Dorsolateral prefrontal cortex (tissue), 120 donors: ENCODE measurements at regions of chr2 and their contacts with region 1.

Region 1: DNA sequence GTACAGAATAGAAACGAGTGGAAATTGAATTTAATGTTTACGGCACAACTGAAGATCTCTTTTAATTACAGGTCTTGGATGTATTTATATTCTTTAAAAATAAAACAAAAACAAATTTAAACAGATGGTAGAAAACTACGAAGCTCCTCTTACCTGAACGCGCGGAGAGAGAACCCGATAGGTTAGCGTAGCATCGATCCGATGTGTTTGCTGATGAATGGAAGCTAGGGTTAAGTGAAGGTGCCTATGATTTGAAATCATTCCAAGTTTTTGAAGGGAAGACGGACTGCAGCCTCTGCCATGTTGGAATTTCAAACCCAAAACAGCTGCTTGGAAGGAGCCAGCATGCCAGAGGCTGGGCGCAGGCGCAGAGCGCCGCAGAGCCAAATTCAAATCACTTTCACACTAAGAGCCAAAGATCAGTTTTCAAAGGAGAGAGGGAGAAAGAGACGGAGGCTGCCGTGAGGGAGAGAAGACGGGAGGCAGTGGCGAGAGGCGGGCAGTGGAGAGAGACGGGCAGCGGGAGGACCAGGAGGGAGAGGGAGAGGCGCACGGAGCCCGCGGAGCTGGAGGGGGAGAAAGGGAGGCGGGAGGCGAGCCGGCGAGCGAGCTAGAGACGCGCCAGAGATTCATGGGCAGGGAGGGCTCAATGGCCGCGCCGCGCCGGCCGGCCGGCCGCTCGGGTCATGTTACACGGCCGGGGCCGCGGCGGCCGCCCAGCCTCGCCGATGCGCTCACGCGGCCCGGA is at the start of gene FIGN:
- DNase-seq: peak; percentile 12 to 87 (median 80)
- H3K4me3 ChIP-seq: peak within 1 kb of the TSS; percentile 55 to 88 (median 77)
- H3K27ac ChIP-seq: peak within 1 kb of the TSS; percentile 55 to 94 (median 89)
- H3K27me3 ChIP-seq: peaks cover 0 to 5% (median 0%) of the 10 kb centered on the region in 45 donors
- CTCF ChIP-seq: peak in 3 of 56 donors; percentile 9 to 26 (median 15)
- total RNA-seq, gene FIGN: 8.8 to 29.6 (median 19.1) TPM

Region 2: GRCh38 chr2:163345908-163346573 is 389.8 kb before region 1 on chr2:
- intact Hi-C with region 1: loop called in 1 of 2 experiments (anchors 5 kb)
- DNase-seq: peak in 1 of 10 donors; percentile 26
- H3K4me3 ChIP-seq: peak overlapping the region in 1 of 59 donors; percentile 30
- H3K27ac ChIP-seq: peak overlapping the region in 1 of 59 donors; percentile 4
- H3K27me3 ChIP-seq: no peaks in the 10 kb centered on the region
- CTCF ChIP-seq: peak; percentile 79 to 96 (median 89)

Region 3: DNA sequence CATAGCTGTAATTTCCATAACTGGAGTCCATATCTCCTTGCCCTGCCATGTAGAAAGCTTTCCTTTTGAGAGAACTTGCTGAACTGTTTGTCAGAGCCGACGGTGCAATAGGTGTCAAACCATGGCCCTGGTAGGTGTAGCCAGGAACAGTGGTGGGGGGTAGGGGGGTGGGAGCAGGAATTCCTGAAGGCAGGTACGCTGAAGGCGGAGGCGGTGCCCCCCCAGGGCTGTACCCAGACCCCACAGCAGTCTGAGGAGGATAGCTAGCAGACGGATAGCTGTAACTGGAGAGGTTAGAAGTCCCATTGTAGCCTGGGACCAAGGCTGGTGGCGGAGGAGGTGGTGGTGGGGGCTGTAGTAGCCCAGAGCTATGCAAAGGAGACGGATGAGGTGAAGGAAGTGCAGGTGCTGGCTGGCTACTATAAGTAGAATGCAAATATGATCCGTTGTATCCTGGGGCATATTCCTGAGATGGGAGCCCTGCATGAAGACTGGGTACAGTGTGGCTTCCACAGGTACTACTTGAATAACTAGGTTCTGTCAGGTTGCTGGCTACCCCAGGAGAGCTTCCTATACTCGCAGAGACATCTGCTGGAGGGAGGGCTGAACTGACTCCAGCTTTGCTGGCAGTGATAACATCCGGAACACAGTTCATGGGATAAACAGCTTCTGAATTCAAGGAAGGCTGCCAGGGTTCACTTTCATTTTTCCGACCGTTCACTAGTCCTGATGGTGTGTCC is 124.9 kb before region 1 on chr2:
- intact Hi-C with region 1: loop called in 1 of 2 experiments (anchors 5 kb)
- DNase-seq: peak in 5 of 10 donors; percentile 14 to 73 (median 45)
- H3K4me3 ChIP-seq: peak overlapping the region in 40 of 59 donors; percentile 5 to 59 (median 31)
- H3K27ac ChIP-seq: peak overlapping the region in 36 of 59 donors; percentile 1 to 87 (median 60)
- H3K27me3 ChIP-seq: no peaks in the 10 kb centered on the region
- CTCF ChIP-seq: peak in 54 of 56 donors; percentile 10 to 69 (median 47)

Region 4: DNA sequence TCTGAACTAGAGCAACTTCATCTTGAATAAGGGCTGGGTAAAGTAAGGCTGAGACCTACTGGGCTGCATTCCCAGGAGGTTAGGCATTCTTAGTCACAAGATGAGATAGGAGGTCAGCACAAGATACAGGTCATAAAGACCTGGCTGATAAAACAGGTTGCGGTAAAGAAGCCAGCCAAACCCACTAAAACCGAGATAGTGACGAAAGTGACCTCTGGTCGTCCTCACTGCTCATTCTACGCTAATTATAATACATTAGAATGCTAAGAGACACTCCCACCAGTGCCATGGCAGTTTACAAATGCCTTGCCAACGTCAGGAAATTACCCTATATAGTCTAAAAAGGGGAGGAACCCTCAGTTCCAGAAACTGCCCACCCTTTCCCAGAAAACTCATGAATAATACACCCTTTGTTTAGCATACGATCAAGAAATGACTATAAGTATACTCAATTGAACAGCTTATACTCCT is 109.2 kb before region 1 on chr2:
- intact Hi-C with region 1: no loop called
- DNase-seq: no peak
- H3K4me3 ChIP-seq: no peak overlapping the region
- H3K27ac ChIP-seq: no peak overlapping the region
- H3K27me3 ChIP-seq: no peaks in the 10 kb centered on the region
- CTCF ChIP-seq: no peak

Region 5: DNA sequence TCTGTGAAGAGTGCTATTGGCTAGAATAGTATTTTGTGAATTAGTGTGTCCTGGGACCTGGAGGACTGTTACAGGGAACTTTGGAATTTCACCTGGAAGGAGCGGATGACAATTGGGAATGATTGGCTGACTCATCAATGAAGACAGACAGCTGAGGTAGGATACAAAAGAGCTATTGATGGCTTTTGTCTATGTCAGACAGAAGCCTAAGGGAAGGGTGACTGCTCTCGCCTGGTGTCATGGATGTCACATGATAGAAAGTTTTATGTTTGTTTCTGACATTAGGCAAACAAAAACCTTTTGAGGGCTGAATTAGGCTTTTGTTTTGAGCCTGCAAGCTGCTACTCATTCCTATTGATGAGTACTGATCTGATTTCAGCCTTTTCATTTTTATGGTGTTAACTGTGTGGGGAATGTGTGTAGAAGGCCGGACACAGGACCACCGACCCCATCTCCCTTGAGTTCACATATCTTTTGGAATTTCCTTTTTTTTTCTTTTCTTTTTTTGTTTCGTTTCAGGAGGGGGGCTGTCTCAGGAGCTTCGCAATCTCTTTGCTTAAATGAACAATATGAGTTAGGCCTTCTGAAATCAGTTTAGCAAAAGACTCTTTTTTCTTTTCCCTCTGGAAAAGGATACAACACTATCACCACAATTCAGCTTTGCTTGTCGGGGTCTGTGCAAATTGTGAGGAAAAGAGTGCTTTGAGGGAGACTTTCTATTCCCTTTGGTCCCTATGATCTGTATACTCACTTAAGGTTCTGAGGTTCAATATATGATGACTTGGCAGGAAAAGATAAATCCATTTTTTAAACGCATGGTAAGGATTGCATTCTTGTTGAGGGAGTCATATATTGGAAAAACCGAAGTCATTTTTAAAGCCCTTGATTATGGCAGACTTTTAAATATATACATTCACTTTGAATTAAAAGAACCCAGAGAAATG is 207.8 kb after region 1 on chr2:
- intact Hi-C with region 1: loop called (anchors 5 to 10 kb)
- DNase-seq: peak in 2 of 10 donors; percentile 41 to 45
- H3K4me3 ChIP-seq: peak overlapping the region in 15 of 59 donors; percentile 0 to 48 (median 20)
- H3K27ac ChIP-seq: peak overlapping the region in 55 of 59 donors; percentile 51 to 94 (median 80)
- H3K27me3 ChIP-seq: no peaks in the 10 kb centered on the region
- CTCF ChIP-seq: no peak

Region 6: GRCh38 chr2:164015328-164016123 is 279.7 kb after region 1 on chr2:
- intact Hi-C with region 1: loop called in 1 of 2 experiments (anchors 5 kb)
- DNase-seq: no peak
- H3K4me3 ChIP-seq: no peak overlapping the region
- H3K27ac ChIP-seq: no peak overlapping the region
- H3K27me3 ChIP-seq: no peaks in the 10 kb centered on the region
- CTCF ChIP-seq: no peak

Region 7: GRCh38 chr2:164061129-164061746 is 325.4 kb after region 1 on chr2:
- intact Hi-C with region 1: loop called in 1 of 2 experiments (anchors 5 kb)
- DNase-seq: peak in 2 of 10 donors; percentile 10 to 51
- H3K4me3 ChIP-seq: no peak overlapping the region
- H3K27ac ChIP-seq: no peak overlapping the region
- H3K27me3 ChIP-seq: no peaks in the 10 kb centered on the region
- CTCF ChIP-seq: peak; percentile 41 to 86 (median 72)